ENCODE measurements at regions of chr17 and their contacts with region 1.

Region 1: GRCh38 chr17:42760652-42761581 is at the start of gene RAMP2:
- DNase-seq: no peak
- H3K4me3 Mint-ChIP-seq: no peak within 1 kb of the TSS
- H3K27ac Mint-ChIP-seq: no peak within 1 kb of the TSS
- H3K4me1 Mint-ChIP-seq: peaks cover 11% of the 10 kb centered on the region
- H3K27me3 Mint-ChIP-seq: peaks cover 56% of the 10 kb centered on the region
- total RNA-seq, gene RAMP2: not detected

Region 2: DNA sequence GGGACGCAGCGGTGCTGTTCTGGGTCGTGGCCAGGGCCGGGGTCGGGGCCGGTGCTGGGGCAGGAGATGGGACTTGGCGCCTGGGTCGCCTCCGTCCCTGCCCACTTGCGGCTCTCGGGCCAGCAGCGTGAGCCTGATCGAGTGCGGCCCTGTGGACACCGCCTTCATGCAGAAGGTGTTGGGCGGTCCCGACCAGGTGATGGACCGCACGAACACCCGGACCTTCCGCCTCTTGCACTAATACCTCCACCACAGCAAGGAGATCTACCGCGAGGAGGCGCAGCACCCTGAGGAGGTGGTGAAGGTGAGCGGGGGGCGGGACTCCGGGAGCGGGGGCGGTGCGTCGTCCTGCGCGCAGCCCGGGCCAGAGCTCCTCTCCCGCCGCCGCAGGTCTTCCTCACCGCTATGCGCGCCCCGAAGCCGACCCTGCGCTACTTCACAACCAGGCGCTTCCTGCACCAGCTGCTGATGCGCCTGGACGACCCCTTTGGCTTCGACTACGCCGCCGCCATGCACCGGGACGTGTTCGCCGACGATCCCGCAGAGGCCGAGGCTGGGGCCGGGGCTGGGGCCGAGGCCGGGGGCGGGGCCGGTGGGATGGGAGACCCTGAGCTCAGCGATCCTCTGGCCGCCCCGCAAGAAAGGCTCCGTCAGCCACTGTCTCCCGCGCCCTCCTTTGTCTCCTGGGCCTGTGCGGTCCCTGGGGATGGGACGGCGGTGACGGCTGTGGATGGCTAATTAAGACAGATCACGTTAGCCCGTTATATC is 212.7 kb before region 1 on chr17:
- CTCF ChIA-PET with region 1: interaction called, 3 read pairs
- intact Hi-C with region 1: loop called (anchors 1 kb)
- DNase-seq: peak; percentile 89
- H3K4me3 Mint-ChIP-seq: peak overlapping the region; percentile 21
- H3K27ac Mint-ChIP-seq: no peak overlapping the region
- H3K4me1 Mint-ChIP-seq: peaks cover 13% of the 10 kb centered on the region
- H3K27me3 Mint-ChIP-seq: no peaks in the 10 kb centered on the region

Region 3: GRCh38 chr17:42704837-42705494 is 56.0 kb before region 1 on chr17:
- CTCF ChIA-PET with region 1: interaction called, 3 read pairs
- intact Hi-C with region 1: loop called (anchors 10 kb)
- DNase-seq: peak; percentile 83
- H3K4me3 Mint-ChIP-seq: no peak overlapping the region
- H3K27ac Mint-ChIP-seq: no peak overlapping the region
- H3K4me1 Mint-ChIP-seq: peaks cover 29% of the 10 kb centered on the region
- H3K27me3 Mint-ChIP-seq: no peaks in the 10 kb centered on the region

Region 4: GRCh38 chr17:42720996-42721583 is 39.8 kb before region 1 on chr17:
- CTCF ChIA-PET with region 1: interaction called, 9 read pairs
- intact Hi-C with region 1: loop called (anchors 1 kb)
- DNase-seq: peak; percentile 35
- H3K4me3 Mint-ChIP-seq: no peak overlapping the region
- H3K27ac Mint-ChIP-seq: no peak overlapping the region
- H3K4me1 Mint-ChIP-seq: no peaks in the 10 kb centered on the region
- H3K27me3 Mint-ChIP-seq: no peaks in the 10 kb centered on the region

Region 5: DNA sequence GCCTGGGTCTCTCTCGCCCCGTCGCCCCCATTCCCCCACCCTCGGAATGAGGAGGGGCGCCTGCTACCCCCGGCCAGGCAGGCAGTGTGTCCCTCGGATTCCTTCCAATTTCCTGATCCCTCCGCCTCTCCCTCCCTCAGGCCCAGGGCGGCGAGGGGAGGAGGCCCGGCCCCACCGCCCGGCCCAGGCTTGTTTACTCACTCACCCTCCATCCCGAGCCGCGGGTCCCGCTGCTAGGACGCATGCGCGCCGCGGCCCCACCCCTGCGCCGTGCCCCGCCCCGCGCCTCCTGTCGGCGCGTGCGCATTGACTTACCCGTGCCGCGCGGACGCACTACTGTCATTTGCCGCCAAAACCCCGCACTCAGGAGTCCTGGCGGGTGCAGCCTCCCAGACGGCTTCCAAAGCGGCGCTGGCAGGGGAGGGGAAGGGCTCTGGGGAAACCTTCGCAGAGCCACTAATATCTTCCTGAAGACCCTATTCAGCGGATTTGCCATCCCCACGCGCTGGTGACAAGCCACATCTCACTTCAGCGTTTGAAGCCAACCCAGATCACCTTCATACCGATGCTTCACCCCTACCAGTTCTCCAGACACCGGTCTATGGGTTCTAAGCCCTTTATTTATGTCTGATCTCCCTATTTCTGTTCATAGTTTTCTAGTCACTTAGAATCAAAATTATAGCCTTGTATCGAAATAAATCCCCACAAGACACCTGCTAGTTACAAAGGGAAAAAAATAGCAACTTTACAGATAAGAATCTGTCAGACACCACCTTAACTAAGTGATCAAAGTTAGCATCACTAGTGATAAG is 15.9 kb before region 1 on chr17 and contains the start of gene EZH1:
- CTCF ChIA-PET with region 1: interaction called, 19 read pairs
- intact Hi-C with region 1: loop called (anchors 1 kb)
- DNase-seq: peak; percentile 93
- H3K4me3 Mint-ChIP-seq: peak within 1 kb of the TSS; percentile 90
- H3K27ac Mint-ChIP-seq: peak within 1 kb of the TSS; percentile 93
- H3K4me1 Mint-ChIP-seq: peaks cover 21% of the 10 kb centered on the region
- H3K27me3 Mint-ChIP-seq: peaks cover 6% of the 10 kb centered on the region
- total RNA-seq, gene EZH1: 31.9 to 34.0 TPM

Region 6: GRCh38 chr17:42750739-42751344 is 10.1 kb before region 1 on chr17:
- CTCF ChIA-PET with region 1: interaction called, 19 read pairs
- intact Hi-C with region 1: no loop called
- DNase-seq: no peak
- H3K4me3 Mint-ChIP-seq: no peak overlapping the region
- H3K27ac Mint-ChIP-seq: no peak overlapping the region
- H3K4me1 Mint-ChIP-seq: no peaks in the 10 kb centered on the region
- H3K27me3 Mint-ChIP-seq: peaks cover 11% of the 10 kb centered on the region

Region 7: GRCh38 chr17:42773290-42774035 is 12.5 kb after region 1 on chr17 and contains the start of gene VPS25:
- CTCF ChIA-PET with region 1: interaction called, 10 read pairs
- intact Hi-C with region 1: no loop called
- DNase-seq: peak; percentile 84
- H3K4me3 Mint-ChIP-seq: peak within 1 kb of the TSS; percentile 99
- H3K27ac Mint-ChIP-seq: peak within 1 kb of the TSS; percentile 92
- H3K4me1 Mint-ChIP-seq: peaks cover 25% of the 10 kb centered on the region
- H3K27me3 Mint-ChIP-seq: no peaks in the 10 kb centered on the region
- total RNA-seq, gene VPS25: 57.5 to 58.2 TPM

Region 8: GRCh38 chr17:42898147-42898807 is 137.4 kb after region 1 on chr17:
- CTCF ChIA-PET with region 1: no interaction called
- intact Hi-C with region 1: no loop called
- DNase-seq: no peak
- H3K4me3 Mint-ChIP-seq: no peak overlapping the region
- H3K27ac Mint-ChIP-seq: no peak overlapping the region
- H3K4me1 Mint-ChIP-seq: no peaks in the 10 kb centered on the region
- H3K27me3 Mint-ChIP-seq: peaks cover 5% of the 10 kb centered on the region

Measured in activated naive CD4-positive, alpha-beta T cell treated with anti-CD3 and anti-CD28 coated beads for 36 hours (primary cell).